CD14-positive monocyte (primary cell): ENCODE measurements at regions of chr5 and their contacts with region 1.

Region 1: GRCh38 chr5:180328296-180329137 is 24.6 kb downstream of the GFPT2 start:
- DNase-seq: peak; percentile 65 to 83 (median 75)
- H3K4me3 ChIP-seq: no peak overlapping the region
- H3K4me3 Mint-ChIP-seq: no peak overlapping the region
- H3K27ac ChIP-seq: no peak overlapping the region
- H3K27ac Mint-ChIP-seq: no peak overlapping the region
- H3K4me1 ChIP-seq: no peaks in the 10 kb centered on the region
- H3K4me1 Mint-ChIP-seq: no peaks in the 10 kb centered on the region
- H3K27me3 ChIP-seq: peaks cover 0 to 6% of the 10 kb centered on the region in 2 donors
- H3K27me3 Mint-ChIP-seq: peaks cover 23 to 38% (median 23%) of the 10 kb centered on the region in 3 donors
- CTCF ChIP-seq: peak; percentile 95

Region 2: DNA sequence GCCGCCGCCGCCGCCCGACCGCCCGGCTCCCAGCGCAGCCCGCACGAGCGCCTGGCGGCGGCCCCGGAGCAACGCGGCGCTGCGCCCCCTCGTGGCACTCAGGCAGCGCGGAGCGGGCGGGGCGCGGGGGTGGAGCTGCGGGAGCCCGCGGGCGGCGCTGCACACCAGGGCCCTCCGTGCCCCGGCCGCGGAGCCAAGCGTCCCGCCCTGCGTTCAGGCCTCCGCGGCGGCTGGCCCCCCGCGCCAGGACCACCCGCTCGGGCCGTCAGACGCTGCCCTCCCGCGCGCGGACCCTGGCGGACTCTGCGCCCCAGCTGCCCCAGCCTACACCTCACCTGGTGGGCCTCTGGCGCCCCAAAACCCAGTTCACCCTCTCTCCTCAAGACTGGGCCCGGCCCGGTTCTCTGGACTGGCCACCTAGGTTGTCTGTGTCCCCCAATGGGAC is 119.4 kb before region 1 on chr5 and contains the start of gene RASGEF1C:
- intact Hi-C with region 1: loop called in 1 of 2 experiments (anchors 5 kb)
- DNase-seq: peak; percentile 49 to 73 (median 61)
- H3K4me3 ChIP-seq: peak within 1 kb of the TSS in 2 of 3 experiments; percentile 28 to 47
- H3K4me3 Mint-ChIP-seq: peak within 1 kb of the TSS; percentile 72 to 92
- H3K27ac ChIP-seq: no peak within 1 kb of the TSS
- H3K27ac Mint-ChIP-seq: peak within 1 kb of the TSS in 1 of 7 donors; percentile 72
- H3K4me1 ChIP-seq: peaks cover 5 to 10% of the 10 kb centered on the region in 2 donors
- H3K4me1 Mint-ChIP-seq: peaks cover 8% of the 10 kb centered on the region
- H3K27me3 ChIP-seq: peaks cover 5 to 29% of the 10 kb centered on the region in 2 donors
- H3K27me3 Mint-ChIP-seq: peaks cover 26 to 64% (median 44%) of the 10 kb centered on the region in 3 donors
- CTCF ChIP-seq: peak; percentile 31
- polyA plus RNA-seq, gene RASGEF1C: not detected

Region 3: GRCh38 chr5:180222056-180222455 is 106.5 kb before region 1 on chr5:
- intact Hi-C with region 1: no loop called
- DNase-seq: no peak
- H3K4me3 ChIP-seq: no peak overlapping the region
- H3K4me3 Mint-ChIP-seq: no peak overlapping the region
- H3K27ac ChIP-seq: no peak overlapping the region
- H3K27ac Mint-ChIP-seq: no peak overlapping the region
- H3K4me1 ChIP-seq: no peaks in the 10 kb centered on the region
- H3K4me1 Mint-ChIP-seq: no peaks in the 10 kb centered on the region
- H3K27me3 ChIP-seq: no peaks in the 10 kb centered on the region
- H3K27me3 Mint-ChIP-seq: peaks cover 0 to 4% (median 1%) of the 10 kb centered on the region in 3 donors
- CTCF ChIP-seq: no peak

Region 4: GRCh38 chr5:180291943-180292831 is 36.3 kb before region 1 on chr5 and contains the start of gene MAPK9:
- intact Hi-C with region 1: loop called in 1 of 2 experiments (anchors 2 kb)
- DNase-seq: peak; percentile 68 to 80 (median 75)
- H3K4me3 ChIP-seq: peak within 1 kb of the TSS; percentile 53 to 90 (median 79)
- H3K4me3 Mint-ChIP-seq: peak within 1 kb of the TSS; percentile 92 to 93
- H3K27ac ChIP-seq: peak within 1 kb of the TSS; percentile 50 to 76
- H3K27ac Mint-ChIP-seq: peak within 1 kb of the TSS; percentile 60 to 94 (median 92)
- H3K4me1 ChIP-seq: peaks cover 27 to 44% of the 10 kb centered on the region in 2 donors
- H3K4me1 Mint-ChIP-seq: peaks cover 51% of the 10 kb centered on the region
- H3K27me3 ChIP-seq: no peaks in the 10 kb centered on the region
- H3K27me3 Mint-ChIP-seq: peaks cover 1 to 2% (median 2%) of the 10 kb centered on the region in 3 donors
- CTCF ChIP-seq: no peak
- polyA plus RNA-seq, gene MAPK9: 9.7 to 19.6 (median 16.2) TPM